B cell (primary cell): ENCODE measurements at regions of chr2 and their contacts with region 1.

Region 1: GRCh38 chr2:26745609-26746327 is 18.3 kb upstream of the SLC35F6 start:
- DNase-seq: peak; percentile 79
- ATAC-seq: peak; percentile 73
- H3K4me3 ChIP-seq: no peak overlapping the region
- H3K4me3 Mint-ChIP-seq: no peak overlapping the region
- H3K27ac ChIP-seq: no peak overlapping the region
- H3K27ac Mint-ChIP-seq: no peak overlapping the region
- H3K4me1 ChIP-seq: no peaks in the 10 kb centered on the region
- H3K4me1 Mint-ChIP-seq: peaks cover 12% of the 10 kb centered on the region
- H3K27me3 ChIP-seq: no peaks in the 10 kb centered on the region
- H3K27me3 Mint-ChIP-seq: peaks cover 3% of the 10 kb centered on the region
- CTCF ChIP-seq: peak; percentile 92

Region 2: GRCh38 chr2:26605195-26605998 is 140.4 kb before region 1 on chr2:
- CTCF ChIA-PET with region 1: interaction called, 26 read pairs
- POLR2A ChIA-PET with region 1: no interaction called
- intact Hi-C with region 1: no loop called
- DNase-seq: peak; percentile 57
- ATAC-seq: no peak
- H3K4me3 ChIP-seq: no peak overlapping the region
- H3K4me3 Mint-ChIP-seq: no peak overlapping the region
- H3K27ac ChIP-seq: no peak overlapping the region
- H3K27ac Mint-ChIP-seq: no peak overlapping the region
- H3K4me1 ChIP-seq: peaks cover 7 to 15% of the 10 kb centered on the region in 2 donors
- H3K4me1 Mint-ChIP-seq: peaks cover 12% of the 10 kb centered on the region
- H3K27me3 ChIP-seq: peaks cover 0 to 6% (median 1%) of the 10 kb centered on the region in 4 experiments
- H3K27me3 Mint-ChIP-seq: peaks cover 20% of the 10 kb centered on the region
- CTCF ChIP-seq: peak; percentile 68

Region 3: GRCh38 chr2:26733413-26733812 is 12.4 kb before region 1 on chr2:
- CTCF ChIA-PET with region 1: interaction called, 12 read pairs
- POLR2A ChIA-PET with region 1: no interaction called
- intact Hi-C with region 1: no loop called
- DNase-seq: no peak
- ATAC-seq: no peak
- H3K4me3 ChIP-seq: no peak overlapping the region
- H3K4me3 Mint-ChIP-seq: no peak overlapping the region
- H3K27ac ChIP-seq: no peak overlapping the region
- H3K27ac Mint-ChIP-seq: no peak overlapping the region
- H3K4me1 ChIP-seq: no peaks in the 10 kb centered on the region
- H3K4me1 Mint-ChIP-seq: no peaks in the 10 kb centered on the region
- H3K27me3 ChIP-seq: peaks cover 0 to 11% (median 2%) of the 10 kb centered on the region in 4 experiments
- H3K27me3 Mint-ChIP-seq: peaks cover 33% of the 10 kb centered on the region
- CTCF ChIP-seq: no peak